PC-3 (cell line): ENCODE measurements at regions of chr6 and their contacts with region 1.

Region 1: GRCh38 chr6:147891671-147892070 is 383.2 kb downstream of the SAMD5 start:
- DNase-seq: no peak
- ATAC-seq: no peak
- H3K4me3 ChIP-seq: no peak overlapping the region
- H3K27ac ChIP-seq: no peak overlapping the region
- H3K4me1 ChIP-seq: no peaks in the 10 kb centered on the region
- H3K27me3 ChIP-seq: no peaks in the 10 kb centered on the region
- CTCF ChIP-seq: no peak

Region 2: DNA sequence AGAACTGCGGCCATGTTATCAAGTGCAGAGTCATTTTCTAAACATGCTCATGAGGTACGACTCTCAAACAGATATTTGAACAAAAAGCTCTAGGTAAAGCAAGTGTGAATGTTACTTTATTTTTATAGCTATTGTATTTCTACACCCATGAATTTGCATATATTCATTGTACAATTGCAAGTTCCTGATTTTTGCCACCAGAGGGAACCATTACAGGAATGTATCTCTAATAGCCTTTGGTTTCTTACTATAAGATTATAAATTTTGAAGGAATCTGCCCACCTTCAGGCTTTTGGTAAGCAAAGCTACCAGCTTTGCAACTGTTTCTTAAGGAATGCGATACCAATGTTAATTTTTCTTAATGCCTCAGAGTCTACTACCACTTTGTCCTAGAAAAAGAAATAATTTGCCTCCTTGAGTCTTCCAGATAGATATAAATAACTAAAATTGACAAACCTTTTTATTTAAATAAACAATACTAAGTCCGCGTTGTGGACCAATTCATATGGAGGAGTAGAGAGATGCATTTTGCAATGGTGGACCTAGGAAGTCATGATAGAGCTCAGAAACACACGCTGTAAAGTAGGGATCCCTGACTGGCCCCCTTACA is 508.6 kb before region 1 on chr6:
- CTCF ChIA-PET with region 1: interaction called, 11 read pairs
- POLR2A ChIA-PET with region 1: no interaction called
- intact Hi-C with region 1: no loop called
- DNase-seq: peak; percentile 55
- ATAC-seq: peak; percentile 46
- H3K4me3 ChIP-seq: no peak overlapping the region
- H3K27ac ChIP-seq: no peak overlapping the region
- H3K4me1 ChIP-seq: no peaks in the 10 kb centered on the region
- H3K27me3 ChIP-seq: no peaks in the 10 kb centered on the region
- CTCF ChIP-seq: peak; percentile 63